PC-3 (cell line): ENCODE measurements at regions of chr10 and their contacts with region 1.

Region 1: DNA sequence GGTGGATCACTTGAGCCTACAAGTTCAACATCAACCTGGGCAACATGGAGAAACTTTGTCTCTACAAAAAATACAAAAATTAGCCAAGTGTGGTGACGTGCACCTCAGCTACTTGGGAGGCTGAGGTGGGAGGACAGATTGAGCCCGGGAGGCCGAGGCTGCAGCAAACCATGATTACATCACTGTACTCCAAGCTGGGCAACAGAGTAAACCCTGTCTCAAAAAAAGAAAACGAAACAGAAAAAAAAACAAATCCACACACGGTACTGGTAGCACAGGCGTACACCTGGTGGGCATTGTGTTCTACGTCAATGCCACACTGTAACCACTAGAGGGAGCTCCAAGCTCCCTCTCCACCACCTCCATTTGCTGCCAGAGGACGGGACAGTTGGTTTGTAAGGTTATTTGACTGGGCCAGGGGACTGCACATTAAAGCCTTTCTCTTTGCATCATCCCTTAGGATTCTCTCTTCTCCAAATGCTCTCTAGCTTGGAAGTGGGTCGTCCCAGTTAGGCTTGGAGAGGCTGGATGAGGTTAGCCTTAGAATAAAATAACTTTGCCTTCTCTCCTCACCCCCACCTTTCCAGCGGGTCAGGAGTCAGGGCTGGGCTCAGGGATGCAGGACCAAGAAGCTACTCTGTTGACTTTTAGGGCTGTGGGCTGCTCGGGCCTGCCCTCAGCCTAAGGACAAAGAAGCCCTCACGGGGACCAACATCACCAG is 130.8 kb downstream of the SORBS1 start:
- DNase-seq: peak; percentile 75
- ATAC-seq: peak; percentile 95
- H3K4me3 ChIP-seq: peak overlapping the region; percentile 34
- H3K27ac ChIP-seq: peak overlapping the region; percentile 21
- H3K4me1 ChIP-seq: peaks cover 10% of the 10 kb centered on the region
- H3K27me3 ChIP-seq: no peaks in the 10 kb centered on the region
- CTCF ChIP-seq: peak; percentile 90

Region 2: DNA sequence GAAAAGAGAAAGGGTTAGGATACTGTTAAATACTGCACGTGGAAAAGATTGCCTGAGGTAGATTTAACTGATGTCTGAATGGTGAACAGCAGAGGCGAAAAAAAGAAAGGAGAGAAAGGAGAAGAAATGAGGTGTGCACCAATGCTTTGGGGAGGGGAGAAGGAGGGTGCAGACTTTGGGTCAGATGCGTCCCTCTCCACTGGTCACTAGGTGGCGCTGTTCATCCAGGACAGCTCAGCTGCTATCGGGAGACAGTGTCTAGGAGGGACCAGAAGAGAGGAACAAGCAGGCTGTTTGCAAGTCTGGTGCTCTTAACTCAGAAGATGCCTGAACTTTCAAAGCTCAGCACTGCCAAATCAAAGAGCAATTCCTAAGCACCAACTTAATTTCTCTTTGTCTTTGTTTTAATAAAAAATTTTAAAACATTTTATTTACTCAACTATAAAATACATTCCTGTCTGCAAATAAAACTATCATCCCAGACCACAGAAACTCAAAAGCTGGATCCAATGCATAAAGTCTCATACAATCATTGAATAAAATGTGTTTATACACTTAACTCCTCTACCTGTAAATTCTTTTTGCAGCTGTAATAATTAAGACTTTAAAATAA is 55.7 kb before region 1 on chr10:
- CTCF ChIA-PET with region 1: interaction called, 4 read pairs
- POLR2A ChIA-PET with region 1: no interaction called
- intact Hi-C with region 1: loop called (anchors 1 kb)
- DNase-seq: peak; percentile 82
- ATAC-seq: peak; percentile 99
- H3K4me3 ChIP-seq: no peak overlapping the region
- H3K27ac ChIP-seq: no peak overlapping the region
- H3K4me1 ChIP-seq: no peaks in the 10 kb centered on the region
- H3K27me3 ChIP-seq: no peaks in the 10 kb centered on the region
- CTCF ChIP-seq: peak; percentile 86

Region 3: DNA sequence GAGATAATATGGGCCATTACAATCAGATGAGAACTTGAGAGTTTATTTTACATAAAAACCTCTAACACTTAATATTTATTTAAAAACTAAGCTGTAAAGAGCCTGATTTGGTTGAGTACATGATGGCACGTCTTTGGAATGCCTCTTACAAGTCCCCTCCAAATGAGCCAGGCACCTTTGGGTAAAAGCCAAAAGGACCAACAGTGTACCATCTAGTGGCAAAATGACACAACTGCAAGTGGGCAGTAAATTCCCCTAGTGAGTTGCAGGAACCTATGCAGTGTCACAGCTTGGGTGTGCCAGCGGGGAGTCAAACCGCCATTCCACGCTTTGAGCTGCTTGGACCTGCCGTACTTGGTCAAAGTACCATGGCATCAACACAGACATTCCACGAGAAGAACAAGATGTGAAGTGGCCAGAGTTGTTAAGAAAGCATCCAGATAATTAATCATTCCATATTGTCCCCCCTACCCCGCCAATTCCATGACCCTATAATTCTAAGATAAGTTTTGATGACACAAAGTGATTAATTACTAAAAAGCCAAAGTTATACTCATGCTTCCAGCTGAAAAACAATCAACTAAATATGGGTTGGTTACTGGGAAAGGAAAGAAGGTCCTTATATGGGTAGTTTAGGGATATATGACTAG is 15.6 kb after region 1 on chr10:
- CTCF ChIA-PET with region 1: no interaction called
- POLR2A ChIA-PET with region 1: no interaction called
- intact Hi-C with region 1: loop called (anchors 2 kb)
- DNase-seq: peak; percentile 84
- ATAC-seq: peak; percentile 61
- H3K4me3 ChIP-seq: no peak overlapping the region
- H3K27ac ChIP-seq: peak overlapping the region; percentile 31
- H3K4me1 ChIP-seq: peaks cover 18% of the 10 kb centered on the region
- H3K27me3 ChIP-seq: no peaks in the 10 kb centered on the region
- CTCF ChIP-seq: peak; percentile 78